ENCODE measurements at regions of chr3 and their contacts with region 1.

Region 1: GRCh38 chr3:72996473-72997333 is at the start of gene PPP4R2:
- DNase-seq: peak; percentile 94
- H3K4me3 Mint-ChIP-seq: peak within 1 kb of the TSS; percentile 92
- H3K27ac Mint-ChIP-seq: peak within 1 kb of the TSS; percentile 90
- H3K4me1 Mint-ChIP-seq: peaks cover 39% of the 10 kb centered on the region
- H3K27me3 Mint-ChIP-seq: no peaks in the 10 kb centered on the region
- total RNA-seq, gene PPP4R2: 107 to 108 TPM

Region 2: GRCh38 chr3:72728988-72729467 is 267.7 kb before region 1 on chr3:
- CTCF ChIA-PET with region 1: no interaction called
- POLR2A ChIA-PET with region 1: no interaction called
- intact Hi-C with region 1: no loop called
- DNase-seq: no peak
- H3K4me3 Mint-ChIP-seq: no peak overlapping the region
- H3K27ac Mint-ChIP-seq: no peak overlapping the region
- H3K4me1 Mint-ChIP-seq: peaks cover 4% of the 10 kb centered on the region
- H3K27me3 Mint-ChIP-seq: no peaks in the 10 kb centered on the region

Region 3: DNA sequence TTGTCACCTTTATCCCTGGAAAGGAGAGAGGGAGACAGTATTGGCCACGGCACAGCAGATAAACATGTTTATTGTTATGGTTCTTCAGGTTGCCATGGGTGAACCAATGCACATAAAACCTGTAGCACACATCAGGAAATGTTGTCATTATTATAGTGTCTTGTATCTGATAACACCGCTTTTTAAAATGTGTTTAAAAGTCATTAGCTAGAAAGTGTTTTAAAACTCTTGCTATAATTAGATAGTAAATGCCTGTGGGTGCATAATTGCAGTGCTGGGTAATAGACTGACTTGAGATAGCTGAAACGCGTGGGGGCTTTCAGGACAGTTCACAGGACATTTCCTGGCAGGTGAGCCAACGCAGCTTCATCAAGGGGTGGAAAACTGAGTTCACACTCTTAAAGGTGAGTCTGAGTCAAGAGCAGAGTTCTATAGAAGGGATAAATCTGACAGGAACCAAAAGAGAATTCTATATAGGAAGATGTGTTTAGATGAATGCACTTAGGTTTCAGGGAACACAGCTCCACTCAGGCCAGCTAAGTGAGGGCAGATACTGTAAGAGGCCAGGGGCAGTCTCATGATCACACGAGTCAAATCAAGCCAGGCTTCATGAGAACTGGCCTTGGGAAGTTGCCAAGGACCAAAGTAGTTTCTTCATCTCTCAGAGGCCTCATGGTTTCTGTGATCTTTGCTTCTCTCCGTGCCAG is 35.7 kb before region 1 on chr3:
- CTCF ChIA-PET with region 1: no interaction called
- POLR2A ChIA-PET with region 1: interaction called, 3 read pairs
- intact Hi-C with region 1: loop called (anchors 2 kb)
- DNase-seq: peak; percentile 55
- H3K4me3 Mint-ChIP-seq: no peak overlapping the region
- H3K27ac Mint-ChIP-seq: peak overlapping the region; percentile 35
- H3K4me1 Mint-ChIP-seq: peaks cover 41% of the 10 kb centered on the region
- H3K27me3 Mint-ChIP-seq: no peaks in the 10 kb centered on the region

Region 4: GRCh38 chr3:73029321-73029796 is 32.7 kb after region 1 on chr3:
- CTCF ChIA-PET with region 1: interaction called, 3 read pairs
- POLR2A ChIA-PET with region 1: interaction called, 5 read pairs
- intact Hi-C with region 1: loop called (anchors 1 kb)
- DNase-seq: no peak
- H3K4me3 Mint-ChIP-seq: peak overlapping the region; percentile 0
- H3K27ac Mint-ChIP-seq: peak overlapping the region; percentile 33
- H3K4me1 Mint-ChIP-seq: peaks cover 90% of the 10 kb centered on the region
- H3K27me3 Mint-ChIP-seq: no peaks in the 10 kb centered on the region

Region 5: DNA sequence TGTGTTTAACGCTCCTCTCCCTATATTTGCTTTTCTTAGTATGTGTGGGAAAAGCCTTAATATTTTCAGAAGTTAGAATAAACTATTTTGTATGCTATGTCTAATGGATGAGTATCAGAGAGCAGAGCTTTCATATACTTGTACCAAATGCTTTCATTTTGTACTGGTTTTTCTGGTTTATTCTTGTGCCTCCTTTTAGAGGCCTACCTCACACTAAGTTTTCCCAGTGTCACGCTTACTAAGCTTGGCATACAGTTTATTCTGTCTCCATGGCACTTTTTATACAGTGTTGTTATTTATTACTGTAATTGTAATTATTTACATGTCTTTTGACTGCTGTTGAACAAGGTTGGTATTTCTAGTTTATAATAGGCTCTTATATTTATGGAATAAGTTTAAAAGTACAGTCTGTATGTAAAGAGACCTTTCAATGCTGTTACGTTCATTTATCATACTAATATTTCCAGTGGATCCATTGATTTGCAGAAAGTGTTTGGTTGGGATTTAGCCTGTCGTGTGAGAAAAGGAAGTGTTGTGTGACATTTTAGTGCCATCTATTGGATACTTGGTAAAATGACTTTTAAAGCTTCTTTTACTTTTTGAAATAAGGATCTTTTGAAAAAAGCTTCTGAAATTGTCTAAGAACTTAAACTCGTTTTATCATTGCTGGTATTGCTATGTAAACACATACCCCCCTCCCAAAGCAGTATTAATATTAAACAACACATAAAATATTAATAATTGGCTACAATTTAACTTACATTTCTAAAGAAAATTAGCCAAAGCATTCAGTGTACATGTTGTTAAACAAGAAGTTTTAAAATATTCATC is 59.5 kb after region 1 on chr3:
- CTCF ChIA-PET with region 1: interaction called, 15 read pairs
- POLR2A ChIA-PET with region 1: no interaction called
- intact Hi-C with region 1: loop called (anchors 1 kb)
- DNase-seq: no peak
- H3K4me3 Mint-ChIP-seq: no peak overlapping the region
- H3K27ac Mint-ChIP-seq: no peak overlapping the region
- H3K4me1 Mint-ChIP-seq: peaks cover 26% of the 10 kb centered on the region
- H3K27me3 Mint-ChIP-seq: no peaks in the 10 kb centered on the region

Measured in activated CD4-positive, alpha-beta memory T cell treated with anti-CD3 and anti-CD28 coated beads for 36 hours (primary cell).